ENCODE measurements at regions of chr2 and their contacts with region 1.

Region 1: DNA sequence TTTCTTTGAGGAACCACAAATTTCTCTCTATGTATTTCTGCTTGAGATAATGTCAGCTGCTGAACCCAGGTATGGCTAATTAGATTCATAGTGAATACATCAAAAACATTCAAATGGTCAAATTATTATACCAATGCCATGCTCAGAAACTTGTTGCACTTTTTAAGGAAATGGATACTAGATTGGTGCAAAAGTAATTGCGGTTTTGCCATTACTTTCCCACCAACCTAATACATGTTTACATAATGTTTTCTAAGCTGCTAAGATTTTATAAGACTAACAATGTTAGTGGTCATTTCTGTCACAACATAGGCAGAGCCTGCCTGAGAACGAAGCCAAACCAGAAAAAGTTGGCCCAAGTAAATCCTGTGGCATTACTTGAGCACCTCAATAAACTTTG is 568.2 kb upstream of the LRATD1 start:
- DNase-seq: no peak
- H3K4me3 ChIP-seq: no peak overlapping the region
- H3K4me3 Mint-ChIP-seq: no peak overlapping the region
- H3K27ac Mint-ChIP-seq: no peak overlapping the region
- H3K4me1 ChIP-seq: no peaks in the 10 kb centered on the region
- H3K4me1 Mint-ChIP-seq: no peaks in the 10 kb centered on the region
- H3K27me3 ChIP-seq: no peaks in the 10 kb centered on the region
- H3K27me3 Mint-ChIP-seq: no peaks in the 10 kb centered on the region
- CTCF ChIP-seq: no peak

Region 2: GRCh38 chr2:14180333-14180732 is 116.0 kb after region 1 on chr2:
- CTCF ChIA-PET with region 1: no interaction called
- POLR2A ChIA-PET with region 1: no interaction called
- intact Hi-C with region 1: loop called (anchors 1 kb)
- DNase-seq: no peak
- H3K4me3 ChIP-seq: no peak overlapping the region
- H3K4me3 Mint-ChIP-seq: no peak overlapping the region
- H3K27ac Mint-ChIP-seq: no peak overlapping the region
- H3K4me1 ChIP-seq: no peaks in the 10 kb centered on the region
- H3K4me1 Mint-ChIP-seq: no peaks in the 10 kb centered on the region
- H3K27me3 ChIP-seq: no peaks in the 10 kb centered on the region
- H3K27me3 Mint-ChIP-seq: no peaks in the 10 kb centered on the region
- CTCF ChIP-seq: no peak